A673 (cell line): ENCODE measurements at regions of chr6 and their contacts with region 1.

Region 1: GRCh38 chr6:145734486-145735355 is 599 bp downstream of the EPM2A start:
- DNase-seq: peak; percentile 92
- H3K4me3 ChIP-seq: peak overlapping the region; percentile 73
- H3K27ac ChIP-seq: peak overlapping the region; percentile 97
- H3K4me1 ChIP-seq: peaks cover 38% of the 10 kb centered on the region
- H3K27me3 ChIP-seq: no peaks in the 10 kb centered on the region
- CTCF ChIP-seq: no peak

Region 2: GRCh38 chr6:145267076-145267867 is 467.4 kb before region 1 on chr6:
- CTCF ChIA-PET with region 1: no interaction called
- POLR2A ChIA-PET with region 1: no interaction called
- intact Hi-C with region 1: loop called (anchors 10 kb)
- DNase-seq: no peak
- H3K4me3 ChIP-seq: no peak overlapping the region
- H3K27ac ChIP-seq: no peak overlapping the region
- H3K4me1 ChIP-seq: peaks cover 18% of the 10 kb centered on the region
- H3K27me3 ChIP-seq: no peaks in the 10 kb centered on the region
- CTCF ChIP-seq: no peak

Region 3: DNA sequence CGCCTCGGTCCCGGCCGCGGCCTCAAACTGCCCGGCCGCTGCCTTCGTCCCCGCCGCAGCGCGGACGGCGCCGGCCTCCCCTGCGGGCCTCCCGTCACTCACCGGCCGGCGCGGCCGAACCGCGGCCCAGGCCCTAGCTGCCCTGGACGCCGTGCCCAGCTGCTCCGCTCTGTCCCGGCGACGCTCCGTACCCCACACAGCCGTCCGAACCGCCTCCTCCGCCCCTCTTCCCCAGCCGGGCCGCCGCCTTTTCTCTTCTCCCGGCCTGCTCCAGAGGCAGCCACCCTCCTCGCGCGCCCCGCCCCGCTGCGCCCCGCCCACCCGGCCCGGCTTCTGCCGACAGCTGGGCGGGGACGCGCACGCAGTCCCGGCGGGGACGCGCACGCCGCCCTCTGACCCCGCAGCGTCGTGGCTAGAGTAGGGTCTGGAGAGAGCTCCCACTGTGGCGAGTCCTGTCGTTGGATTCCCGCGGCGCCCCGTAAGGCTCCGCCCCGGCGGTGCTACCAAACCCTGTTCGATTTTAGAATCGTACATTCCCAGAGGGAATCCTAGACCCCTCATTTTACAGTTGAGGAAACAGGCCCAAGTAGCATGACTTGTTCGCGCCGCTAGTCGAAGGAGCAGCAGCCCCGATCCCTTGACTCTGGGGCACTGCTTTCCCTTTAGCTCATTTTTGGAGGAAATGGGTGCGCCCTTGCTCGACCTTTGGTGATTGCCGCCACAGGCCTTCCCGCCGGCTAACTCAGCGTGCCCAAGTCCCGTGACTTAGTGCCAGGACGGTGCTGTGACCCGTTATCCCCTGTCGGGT is 80.0 kb after region 1 on chr6 and contains the start of gene FBXO30:
- CTCF ChIA-PET with region 1: no interaction called
- POLR2A ChIA-PET with region 1: no interaction called
- intact Hi-C with region 1: loop called (anchors 2 kb)
- DNase-seq: peak; percentile 93
- H3K4me3 ChIP-seq: peak within 1 kb of the TSS; percentile 84
- H3K27ac ChIP-seq: peak within 1 kb of the TSS; percentile 87
- H3K4me1 ChIP-seq: peaks cover 22% of the 10 kb centered on the region
- H3K27me3 ChIP-seq: no peaks in the 10 kb centered on the region
- CTCF ChIP-seq: peak; percentile 12; the same call in 1 of the 2 replicates
- total RNA-seq, gene FBXO30: 10.9 and 12.2 TPM in 2 replicates